ENCODE measurements at regions of chr5 and their contacts with region 1.

Region 1: GRCh38 chr5:142024771-142025304 is 12.0 kb upstream of the GNPDA1 start:
- DNase-seq: peak; percentile 85
- H3K4me3 ChIP-seq: peak overlapping the region in 3 of 4 donors; percentile 28 to 56 (median 45)
- H3K27ac ChIP-seq: peak overlapping the region; percentile 80 to 88 (median 82)
- H3K4me1 ChIP-seq: peaks cover 0 to 10% (median 2%) of the 10 kb centered on the region in 4 donors
- H3K27me3 ChIP-seq: no peaks in the 10 kb centered on the region
- CTCF ChIP-seq: no peak
- EP300 ChIP-seq: no peak
- POLR2A ChIP-seq: peak; percentile 32

Region 2: GRCh38 chr5:140591747-140592372 is 1433.0 kb before region 1 on chr5:
- in situ Hi-C with region 1: no loop called
- intact Hi-C with region 1: no loop called
- DNase-seq: no peak
- H3K4me3 ChIP-seq: no peak overlapping the region
- H3K27ac ChIP-seq: no peak overlapping the region
- H3K4me1 ChIP-seq: peaks cover 0 to 24% (median 0%) of the 10 kb centered on the region in 4 donors
- H3K27me3 ChIP-seq: no peaks in the 10 kb centered on the region
- CTCF ChIP-seq: no peak
- EP300 ChIP-seq: no peak
- POLR2A ChIP-seq: no peak

Region 3: DNA sequence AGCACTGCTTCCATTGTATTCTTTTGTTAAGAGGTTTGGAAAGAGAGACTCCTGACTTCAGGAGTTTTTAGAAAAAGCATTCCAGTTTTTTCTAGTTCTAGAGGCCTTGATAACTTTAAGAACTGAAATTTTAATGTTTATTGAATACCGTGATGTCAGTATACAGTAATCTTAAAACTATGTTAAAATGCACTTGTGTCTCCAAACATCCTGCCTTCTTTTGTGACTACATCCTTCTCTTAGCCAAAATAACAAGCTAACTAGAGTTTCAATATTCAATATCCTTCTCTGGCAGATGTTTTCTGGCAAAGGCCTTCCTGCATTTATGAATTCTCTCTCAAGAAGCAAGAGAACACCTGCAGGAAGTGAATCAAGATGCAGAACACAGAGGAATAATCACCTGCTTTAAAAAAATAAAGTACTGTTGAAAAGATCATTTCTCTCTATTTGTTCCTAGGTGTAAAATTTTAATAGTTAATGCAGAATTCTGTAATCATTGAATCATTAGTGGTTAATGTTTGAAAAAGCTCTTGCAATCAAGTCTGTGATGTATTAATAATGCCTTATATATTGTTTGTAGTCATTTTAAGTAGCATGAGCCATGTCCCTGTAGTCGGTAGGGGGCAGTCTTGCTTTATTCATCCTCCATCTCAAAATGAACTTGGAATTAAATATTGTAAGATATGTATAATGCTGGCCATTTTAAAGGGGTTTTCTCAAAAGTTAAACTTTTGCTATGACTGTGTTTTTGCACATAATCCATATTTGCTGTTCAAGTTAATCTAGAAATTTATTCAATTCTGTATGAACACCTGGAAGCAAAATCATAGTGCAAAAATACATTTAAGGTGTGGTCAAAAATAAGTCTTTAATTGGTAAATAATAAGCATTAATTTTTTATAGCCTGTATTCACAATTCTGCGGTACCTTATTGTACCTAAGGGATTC is 126.9 kb after region 1 on chr5:
- in situ Hi-C with region 1: no loop called
- intact Hi-C with region 1: no loop called
- DNase-seq: peak; percentile 41
- H3K4me3 ChIP-seq: no peak overlapping the region
- H3K27ac ChIP-seq: no peak overlapping the region
- H3K4me1 ChIP-seq: peaks cover 0 to 3% (median 0%) of the 10 kb centered on the region in 4 donors
- H3K27me3 ChIP-seq: no peaks in the 10 kb centered on the region
- CTCF ChIP-seq: peak; percentile 76 to 88 (median 82)
- EP300 ChIP-seq: no peak
- POLR2A ChIP-seq: no peak

Region 4: DNA sequence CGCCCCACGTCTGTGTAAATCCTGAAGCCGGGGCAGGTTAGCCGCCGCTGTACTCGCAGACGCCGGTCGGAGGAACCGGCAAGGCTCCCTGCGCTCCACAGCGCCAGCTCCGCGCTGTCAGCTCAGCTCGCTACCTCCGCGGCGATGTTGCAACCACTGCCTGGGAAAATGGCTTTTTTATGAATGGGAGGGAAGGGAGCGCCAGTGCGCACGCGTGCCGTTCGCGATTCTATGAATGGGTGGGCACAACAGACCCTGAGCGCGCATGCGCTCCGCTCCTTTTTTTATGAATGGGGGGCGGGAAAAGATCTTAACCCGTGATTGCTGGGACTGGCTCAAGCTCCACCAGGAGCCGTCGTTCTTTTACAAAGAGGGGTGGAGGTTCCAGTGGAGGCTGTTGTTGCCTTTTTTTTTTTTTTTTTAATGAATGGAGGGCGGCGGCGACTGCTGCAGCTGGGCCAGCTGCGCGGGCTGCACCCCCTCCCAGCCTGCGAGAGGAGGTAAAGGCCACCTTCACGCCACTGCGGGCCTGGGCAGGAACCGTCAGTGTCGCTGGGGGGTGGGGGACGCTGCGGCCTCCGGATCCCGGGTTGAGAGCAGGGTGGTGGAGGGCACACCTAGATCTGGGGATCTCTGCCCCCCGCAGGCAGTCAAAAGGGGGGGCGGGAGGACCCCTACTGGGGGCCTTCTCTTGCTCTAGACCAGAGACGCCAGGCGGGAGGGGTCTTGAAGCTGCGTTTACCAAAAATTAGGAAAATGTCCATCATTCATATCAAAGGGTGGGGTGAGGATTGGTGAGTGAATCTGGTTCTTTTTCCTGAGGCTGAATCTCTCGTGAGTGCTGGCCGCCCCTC is 300.3 kb after region 1 on chr5 and contains the start of gene SPRY4:
- in situ Hi-C with region 1: loop called in 1 of 4 experiments (anchors 25 kb)
- intact Hi-C with region 1: no loop called
- DNase-seq: peak; percentile 91
- H3K4me3 ChIP-seq: peak within 1 kb of the TSS; percentile 48 to 66 (median 57)
- H3K27ac ChIP-seq: peak within 1 kb of the TSS; percentile 90 to 91 (median 90)
- H3K4me1 ChIP-seq: peaks cover 5 to 55% (median 47%) of the 10 kb centered on the region in 4 donors
- H3K27me3 ChIP-seq: peaks cover 15% of the 10 kb centered on the region
- CTCF ChIP-seq: peak in 1 of 5 experiments; percentile 7
- EP300 ChIP-seq: no peak
- POLR2A ChIP-seq: peak; percentile 90
- total RNA-seq, gene SPRY4: 8.2 to 19.3 (median 15.7) TPM

Measured in transverse colon (tissue), 4 donors.